WTC11 (cell line): ENCODE measurements at regions of chr20 and their contacts with region 1.

Region 1: DNA sequence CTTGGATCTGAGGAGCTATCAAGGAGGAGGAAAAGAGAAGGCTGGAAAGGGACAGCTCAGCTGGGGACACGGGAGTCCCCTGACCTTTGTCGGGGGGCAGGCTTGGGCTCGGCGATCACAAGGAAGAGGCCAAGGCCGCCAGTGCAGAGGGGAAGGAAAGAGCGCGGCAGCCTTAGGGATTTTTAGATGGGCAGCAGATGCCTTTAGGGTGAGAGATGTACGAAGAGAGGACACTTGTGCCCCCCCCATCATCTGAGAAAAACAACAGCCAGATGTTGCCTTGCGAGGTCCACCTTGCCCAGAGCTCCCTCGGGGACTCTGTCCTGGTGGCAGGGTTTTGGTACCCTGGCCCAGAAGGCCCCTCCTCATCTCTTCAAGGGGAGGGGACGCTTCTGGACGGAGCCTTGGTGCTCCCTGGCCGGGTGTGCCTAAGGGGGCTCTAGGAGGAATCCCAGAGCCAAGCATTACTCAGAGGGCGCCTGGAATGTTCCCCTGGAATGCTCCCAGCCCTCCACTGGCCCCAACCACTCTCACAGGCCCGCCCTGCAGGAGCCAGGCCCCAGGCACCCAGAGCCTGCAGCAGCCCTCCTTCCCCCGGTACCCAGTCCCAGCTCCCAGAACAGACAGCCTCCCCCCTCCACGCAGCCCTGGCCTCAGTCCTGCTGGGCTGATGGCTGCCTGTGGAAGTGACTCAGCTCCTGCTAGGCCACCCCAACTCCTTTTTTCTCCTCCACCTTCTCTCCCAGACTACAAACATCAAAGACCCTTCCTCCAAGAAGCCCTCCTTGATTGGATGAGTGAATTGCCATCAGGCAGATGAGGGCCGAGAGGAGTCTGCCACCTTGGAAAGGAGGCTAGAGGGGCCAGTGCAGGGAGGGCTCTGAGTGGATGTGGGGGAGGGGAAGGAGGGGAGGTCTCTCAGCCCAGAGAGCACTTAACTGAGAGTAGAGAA is 1.8 kb downstream of the ADAM33 start:
- DNase-seq: peak; percentile 42
- ATAC-seq: peak; percentile 8
- H3K4me3 Mint-ChIP-seq: peak overlapping the region; percentile 34
- H3K27ac Mint-ChIP-seq: no peak overlapping the region
- H3K4me1 Mint-ChIP-seq: peaks cover 37% of the 10 kb centered on the region
- H3K27me3 Mint-ChIP-seq: peaks cover 25% of the 10 kb centered on the region
- CTCF ChIP-seq: no peak

Region 2: GRCh38 chr20:3652676-3653596 is 27.1 kb before region 1 on chr20:
- CTCF ChIA-PET with region 1: interaction called, 10 read pairs
- POLR2A ChIA-PET with region 1: interaction called, 4 read pairs
- DNase-seq: no peak
- ATAC-seq: peak; percentile 69
- H3K4me3 Mint-ChIP-seq: no peak overlapping the region
- H3K27ac Mint-ChIP-seq: no peak overlapping the region
- H3K4me1 Mint-ChIP-seq: peaks cover 2% of the 10 kb centered on the region
- H3K27me3 Mint-ChIP-seq: peaks cover 4% of the 10 kb centered on the region; the same call in 1 of the 2 replicates
- CTCF ChIP-seq: no peak

Region 3: DNA sequence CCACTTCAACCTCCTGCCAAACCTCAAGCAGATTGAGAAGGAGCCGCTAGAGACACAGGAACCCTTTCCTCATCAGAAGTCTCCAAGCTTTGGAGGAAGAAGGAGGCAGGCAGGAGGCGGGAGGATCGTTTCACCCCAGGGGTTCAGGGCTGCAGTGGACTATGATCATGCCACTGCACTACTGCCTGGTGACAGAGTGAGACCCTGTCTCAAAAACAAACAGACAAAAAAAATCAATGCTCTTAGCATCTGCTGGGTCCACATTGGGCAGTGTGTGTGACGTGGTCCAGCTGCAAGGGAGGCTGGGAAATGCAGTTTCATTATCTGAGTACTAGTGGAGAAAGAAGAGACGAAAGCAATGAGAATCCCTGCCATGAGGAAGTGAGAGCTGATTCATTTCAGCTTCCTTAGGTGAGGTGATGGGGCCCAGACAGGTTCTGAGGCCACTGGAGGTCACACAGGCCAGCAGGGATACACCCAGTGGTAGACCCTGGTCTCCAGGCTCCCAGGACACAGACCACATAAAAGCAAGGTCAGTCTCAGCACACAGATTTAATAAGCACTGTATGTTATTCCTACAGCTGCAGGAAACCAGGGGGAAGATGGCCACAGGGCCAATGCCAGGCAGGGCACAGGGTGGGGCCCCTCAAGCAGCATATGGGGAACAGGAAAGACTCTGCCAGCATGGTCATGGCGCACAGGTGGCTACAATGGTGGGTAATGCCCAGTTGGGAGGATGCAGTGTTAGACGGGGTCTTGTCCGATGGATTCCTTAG is 21.1 kb before region 1 on chr20:
- CTCF ChIA-PET with region 1: interaction called, 13 read pairs
- POLR2A ChIA-PET with region 1: no interaction called
- DNase-seq: no peak
- ATAC-seq: no peak
- H3K4me3 Mint-ChIP-seq: no peak overlapping the region
- H3K27ac Mint-ChIP-seq: no peak overlapping the region
- H3K4me1 Mint-ChIP-seq: peaks cover 8% of the 10 kb centered on the region; the same call in 1 of the 2 replicates
- H3K27me3 Mint-ChIP-seq: peaks cover 48% of the 10 kb centered on the region
- CTCF ChIP-seq: no peak

Region 4: DNA sequence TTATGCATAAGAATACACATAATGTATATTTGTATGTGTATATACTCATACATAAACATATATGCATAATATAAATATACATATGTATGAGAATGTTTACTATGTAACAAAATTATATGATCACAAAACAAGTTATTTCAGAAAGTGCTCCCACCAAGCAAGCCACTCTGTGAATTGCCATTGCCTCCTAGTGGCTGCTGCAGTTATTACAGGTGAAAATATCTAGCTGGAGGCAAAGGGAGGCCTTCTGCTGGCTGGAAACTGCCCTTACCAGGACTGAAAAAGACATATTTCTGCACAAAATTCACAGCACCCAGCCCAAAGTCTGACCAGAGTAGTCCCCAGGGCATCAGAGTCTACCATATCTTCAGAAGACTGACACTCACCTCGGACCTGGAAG is 16.2 kb after region 1 on chr20:
- CTCF ChIA-PET with region 1: interaction called, 70 read pairs
- POLR2A ChIA-PET with region 1: no interaction called
- DNase-seq: no peak
- ATAC-seq: no peak
- H3K4me3 Mint-ChIP-seq: no peak overlapping the region
- H3K27ac Mint-ChIP-seq: no peak overlapping the region
- H3K4me1 Mint-ChIP-seq: no peaks in the 10 kb centered on the region
- H3K27me3 Mint-ChIP-seq: no peaks in the 10 kb centered on the region
- CTCF ChIP-seq: peak; percentile 67; the same call in 1 of the 2 replicates